HAP-1 (cell line): ENCODE measurements at regions of chr21 and their contacts with region 1.

Region 1: GRCh38 chr21:39445321-39446269 is at the start of gene LCA5L:
- DNase-seq: peak; percentile 79 to 94
- H3K4me3 ChIP-seq: peak within 1 kb of the TSS; percentile 80
- H3K4me1 ChIP-seq: peaks cover 7% of the 10 kb centered on the region
- H3K27me3 ChIP-seq: no peaks in the 10 kb centered on the region

Region 2: GRCh38 chr21:39183237-39184007 is 262.2 kb before region 1 on chr21 and contains the start of gene PSMG1:
- in situ Hi-C with region 1: loop called (anchors 10 kb)
- DNase-seq: peak; percentile 87 to 96
- H3K4me3 ChIP-seq: peak within 1 kb of the TSS; percentile 83
- H3K4me1 ChIP-seq: peaks cover 24% of the 10 kb centered on the region
- H3K27me3 ChIP-seq: no peaks in the 10 kb centered on the region